ENCODE measurements at regions of chr11 and their contacts with region 1.

Region 1: GRCh38 chr11:62108017-62108750 is 15.6 kb upstream of the INCENP start:
- DNase-seq: peak in 1 of 2 donors; percentile 83
- ATAC-seq: peak; percentile 60 to 66 (median 63)
- H3K4me3 ChIP-seq: no peak overlapping the region
- H3K4me3 Mint-ChIP-seq: no peak overlapping the region
- H3K27ac ChIP-seq: no peak overlapping the region
- H3K27ac Mint-ChIP-seq: no peak overlapping the region
- H3K4me1 ChIP-seq: peaks cover 22% of the 10 kb centered on the region
- H3K4me1 Mint-ChIP-seq: peaks cover 8 to 16% of the 10 kb centered on the region in 2 donors
- H3K27me3 ChIP-seq: no peaks in the 10 kb centered on the region
- H3K27me3 Mint-ChIP-seq: peaks cover 0 to 2% of the 10 kb centered on the region in 2 donors
- CTCF ChIP-seq: peak; percentile 75

Region 2: DNA sequence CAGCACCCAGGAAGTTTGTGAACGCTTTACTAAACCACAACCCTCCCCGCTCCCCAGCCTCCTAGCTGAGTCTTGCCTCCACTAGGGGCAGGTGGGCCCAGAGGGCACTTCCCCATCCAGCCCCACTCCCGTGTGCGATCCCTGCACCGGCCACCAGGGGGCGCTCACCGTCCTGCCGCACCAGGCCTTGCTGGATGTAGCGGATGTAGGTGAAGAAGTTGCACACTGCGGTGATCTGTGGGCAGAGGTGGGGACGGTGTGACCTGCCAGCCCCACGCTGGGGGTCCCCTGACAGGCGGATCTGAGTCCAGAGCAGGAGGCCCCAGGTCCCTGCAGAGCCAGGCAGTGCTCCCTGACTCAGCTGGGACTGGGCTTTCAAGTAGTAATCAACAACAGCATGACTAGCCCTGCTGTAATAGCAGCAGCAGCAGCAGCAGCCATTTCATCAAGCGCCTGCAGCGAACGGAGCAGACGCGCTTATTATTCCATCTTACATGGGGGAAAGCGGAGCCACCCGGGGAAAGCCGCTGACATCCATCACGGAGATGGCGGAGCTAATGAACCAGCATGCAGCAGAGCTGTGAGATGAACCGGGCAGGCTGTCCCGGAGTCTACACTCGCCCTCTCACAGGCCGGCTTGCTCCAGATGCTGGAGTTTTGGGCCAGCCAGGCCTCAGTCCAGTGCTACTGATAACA is 208.9 kb before region 1 on chr11:
- intact Hi-C with region 1: loop called (anchors 1 kb)
- DNase-seq: peak; percentile 92 to 94
- ATAC-seq: peak; percentile 95 to 96 (median 95)
- H3K4me3 ChIP-seq: no peak overlapping the region
- H3K4me3 Mint-ChIP-seq: peak overlapping the region; percentile 28
- H3K27ac ChIP-seq: no peak overlapping the region
- H3K27ac Mint-ChIP-seq: peak overlapping the region; percentile 50 to 74
- H3K4me1 ChIP-seq: peaks cover 11% of the 10 kb centered on the region
- H3K4me1 Mint-ChIP-seq: peaks cover 0 to 7% of the 10 kb centered on the region in 2 donors
- H3K27me3 ChIP-seq: no peaks in the 10 kb centered on the region
- H3K27me3 Mint-ChIP-seq: peaks cover 0 to 3% of the 10 kb centered on the region in 2 donors
- CTCF ChIP-seq: peak; percentile 99

Measured in natural killer cell (primary cell).